ENCODE measurements at regions of chr7 and their contacts with region 1.

Region 1: GRCh38 chr7:30510124-30511075 is 5.8 kb upstream of the GGCT start:
- DNase-seq: no peak
- ATAC-seq: no peak
- H3K4me3 ChIP-seq: no peak overlapping the region
- H3K27ac ChIP-seq: no peak overlapping the region
- H3K4me1 ChIP-seq: peaks cover 0 to 4% of the 10 kb centered on the region in 2 donors
- H3K27me3 ChIP-seq: no peaks in the 10 kb centered on the region
- CTCF ChIP-seq: peak; percentile 29 to 71 (median 55)
- POLR2A ChIP-seq: no peak

Region 2: DNA sequence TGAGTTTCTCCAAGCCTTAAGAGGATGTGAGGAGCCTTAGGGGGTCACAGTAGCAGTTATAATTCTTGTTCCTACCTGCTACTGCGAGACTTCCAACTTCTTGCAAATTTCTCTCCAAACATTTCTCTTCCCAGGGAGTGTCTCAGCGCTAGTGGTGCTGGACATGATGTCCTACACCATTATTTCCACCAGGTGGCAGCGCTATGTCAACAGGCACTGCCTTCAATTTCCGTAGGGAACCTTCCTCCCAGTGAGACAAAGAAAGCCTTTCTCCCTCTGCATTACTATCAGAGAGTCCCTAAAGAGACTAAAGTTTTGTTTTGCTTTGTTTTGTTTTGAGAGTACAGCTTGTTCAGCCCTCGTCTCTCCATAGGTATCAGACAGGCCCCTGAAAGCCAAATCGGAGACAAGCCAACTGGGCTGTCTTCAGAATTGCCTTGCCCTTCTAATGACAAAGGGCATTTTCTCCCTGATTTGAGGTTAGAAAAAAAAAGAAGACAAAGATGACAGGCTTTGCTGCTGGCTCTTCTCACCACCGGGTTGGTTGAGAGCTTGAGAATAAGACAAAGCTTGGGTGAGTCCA is 38.5 kb after region 1 on chr7:
- in situ Hi-C with region 1: no loop called
- intact Hi-C with region 1: loop called (anchors 5 kb)
- DNase-seq: peak; percentile 42 to 64
- ATAC-seq: peak; percentile 83 to 85
- H3K4me3 ChIP-seq: no peak overlapping the region
- H3K27ac ChIP-seq: peak overlapping the region in 2 of 4 donors; percentile 14 to 28
- H3K4me1 ChIP-seq: peaks cover 12 to 15% of the 10 kb centered on the region in 2 donors
- H3K27me3 ChIP-seq: no peaks in the 10 kb centered on the region
- CTCF ChIP-seq: peak; percentile 72 to 86 (median 77)
- POLR2A ChIP-seq: no peak